A549 (cell line): ENCODE measurements at regions of chr1 and their contacts with region 1.

Region 1: GRCh38 chr1:22025368-22026155 is 24.1 kb downstream of the CELA3A start:
- DNase-seq: peak; percentile 69 to 78
- ATAC-seq: peak; percentile 87 to 90
- H3K4me3 ChIP-seq: peak overlapping the region; percentile 99
- H3K27ac ChIP-seq: peak overlapping the region; percentile 98
- H3K4me1 ChIP-seq: peaks cover 3% of the 10 kb centered on the region; the same call in 1 of the 3 replicates
- CTCF ChIP-seq: no peak
- EP300 ChIP-seq: no peak
- POLR2A ChIP-seq: peak; percentile 49
- RAD21 ChIP-seq: no peak

Region 2: DNA sequence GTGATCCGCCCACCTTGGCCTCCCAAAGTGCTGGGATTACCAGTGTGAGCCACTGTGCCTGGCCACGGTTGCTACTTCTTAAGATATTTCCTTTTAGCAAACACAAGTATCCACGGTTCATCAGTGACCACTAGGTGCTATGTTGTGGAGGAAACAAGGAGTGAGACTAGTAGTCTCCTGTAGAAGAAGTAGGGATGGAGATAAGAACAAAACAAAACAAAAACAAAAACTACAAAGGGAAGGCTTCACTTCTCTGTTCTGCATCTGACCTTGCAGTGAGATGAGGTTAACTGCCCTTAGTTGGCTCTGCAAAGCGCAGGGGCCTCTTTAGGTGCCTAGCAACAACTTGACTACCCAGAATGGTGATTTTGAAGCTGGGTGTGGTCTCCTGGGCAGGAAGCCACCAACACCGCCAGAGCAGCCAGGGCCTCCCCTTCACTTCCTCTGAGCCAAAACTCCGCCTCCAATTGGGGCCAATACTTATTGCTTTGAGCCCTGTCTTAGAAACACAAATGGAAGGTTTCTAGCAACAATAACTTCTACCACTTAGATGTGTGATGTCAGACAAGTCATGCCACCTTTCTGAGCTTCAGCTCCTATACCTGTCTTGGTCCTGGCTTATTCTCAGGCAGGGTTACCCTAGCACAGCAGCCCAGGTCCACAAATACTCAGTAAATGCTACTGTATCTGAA is 14.2 kb after region 1 on chr1:
- CTCF ChIA-PET with region 1: interaction called, 11 read pairs
- POLR2A ChIA-PET with region 1: interaction called, 5 read pairs
- DNase-seq: peak in 1 of 2 experiments; percentile 26
- ATAC-seq: peak in 1 of 2 experiments; percentile 74; a peak in 3 of 6 replicates
- H3K4me3 ChIP-seq: no peak overlapping the region
- H3K27ac ChIP-seq: no peak overlapping the region
- H3K4me1 ChIP-seq: peaks cover 6% of the 10 kb centered on the region; the same call in 2 of the 3 replicates
- CTCF ChIP-seq: no peak
- EP300 ChIP-seq: no peak
- POLR2A ChIP-seq: no peak
- RAD21 ChIP-seq: no peak

Region 3: GRCh38 chr1:22052115-22053016 is 26.8 kb after region 1 on chr1 and contains the start of gene CDC42:
- CTCF ChIA-PET with region 1: interaction called, 3 read pairs
- POLR2A ChIA-PET with region 1: interaction called, 13 read pairs
- DNase-seq: peak; percentile 61 to 94
- ATAC-seq: peak; percentile 96 to 97
- H3K4me3 ChIP-seq: peak within 1 kb of the TSS; percentile 100
- H3K27ac ChIP-seq: peak within 1 kb of the TSS; percentile 100
- H3K4me1 ChIP-seq: peaks cover 18% of the 10 kb centered on the region
- CTCF ChIP-seq: no peak
- EP300 ChIP-seq: no peak
- POLR2A ChIP-seq: peak; percentile 72
- RAD21 ChIP-seq: no peak
- polyA plus RNA-seq, gene CDC42: 212 and 251 TPM in 2 replicates